Common myeloid progenitor, CD34-positive (primary cell): ENCODE measurements at regions of chr4 and their contacts with region 1.

Region 1: GRCh38 chr4:37452952-37453280 is 208.4 kb downstream of the NWD2 start:
- DNase-seq: peak; percentile 81 to 85 (median 83)
- H3K4me3 ChIP-seq: peak overlapping the region in 4 of 7 experiments; percentile 52 to 77 (median 58)
- H3K27ac ChIP-seq: no peak overlapping the region
- H3K4me1 ChIP-seq: peaks cover 3 to 15% (median 13%) of the 10 kb centered on the region in 4 experiments
- H3K27me3 ChIP-seq: peaks cover 11 to 43% (median 29%) of the 10 kb centered on the region in 5 experiments

Region 2: GRCh38 chr4:37415845-37416369 is 37.0 kb before region 1 on chr4:
- CTCF ChIA-PET with region 1: no interaction called
- POLR2A ChIA-PET with region 1: no interaction called
- DNase-seq: no peak
- H3K4me3 ChIP-seq: no peak overlapping the region
- H3K27ac ChIP-seq: no peak overlapping the region
- H3K4me1 ChIP-seq: no peaks in the 10 kb centered on the region
- H3K27me3 ChIP-seq: no peaks in the 10 kb centered on the region

Region 3: DNA sequence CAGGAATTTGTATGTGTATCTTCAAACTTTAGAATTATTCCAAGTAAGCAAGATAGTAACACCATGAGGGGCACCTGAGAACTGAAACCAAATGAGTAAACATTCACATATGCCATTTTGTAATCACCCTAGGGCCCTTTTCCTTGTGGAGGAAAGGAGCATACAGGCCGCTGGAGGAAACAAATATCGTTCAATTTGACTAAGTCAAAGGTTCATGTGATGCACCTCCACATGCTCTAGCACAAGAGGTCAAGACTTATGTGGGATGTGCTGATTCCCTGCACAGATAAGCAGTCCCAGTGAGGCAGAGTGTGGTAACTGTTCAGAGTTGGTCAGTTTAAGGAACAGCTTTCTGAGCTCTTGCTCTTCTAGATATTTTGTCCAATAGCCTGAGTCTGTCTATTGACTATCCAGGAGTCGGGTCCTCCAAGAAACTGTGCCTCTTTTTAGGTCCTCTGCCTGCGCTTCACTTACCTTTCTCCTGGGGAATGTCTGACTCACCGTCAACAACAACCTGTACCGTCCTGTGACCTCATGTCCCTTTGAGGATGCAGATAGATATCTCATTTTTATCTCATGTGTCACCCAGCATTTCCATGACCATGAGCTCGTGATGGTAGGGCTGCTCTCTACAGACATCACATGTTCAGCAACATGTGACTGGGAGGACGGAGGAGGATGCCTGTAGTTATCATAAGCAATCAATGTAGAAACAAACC is 11.5 kb before region 1 on chr4:
- CTCF ChIA-PET with region 1: interaction called, 17 read pairs
- POLR2A ChIA-PET with region 1: no interaction called
- DNase-seq: no peak
- H3K4me3 ChIP-seq: no peak overlapping the region
- H3K27ac ChIP-seq: no peak overlapping the region
- H3K4me1 ChIP-seq: no peaks in the 10 kb centered on the region
- H3K27me3 ChIP-seq: peaks cover 0 to 3% (median 0%) of the 10 kb centered on the region in 5 experiments

Region 4: GRCh38 chr4:37481547-37482122 is 28.7 kb after region 1 on chr4:
- CTCF ChIA-PET with region 1: no interaction called
- POLR2A ChIA-PET with region 1: no interaction called
- DNase-seq: peak in 1 of 3 donors; percentile 17
- H3K4me3 ChIP-seq: no peak overlapping the region
- H3K27ac ChIP-seq: no peak overlapping the region
- H3K4me1 ChIP-seq: peaks cover 0 to 17% (median 8%) of the 10 kb centered on the region in 4 experiments
- H3K27me3 ChIP-seq: no peaks in the 10 kb centered on the region

Region 5: GRCh38 chr4:37561803-37562207 is 108.9 kb after region 1 on chr4:
- CTCF ChIA-PET with region 1: interaction called, 20 read pairs
- POLR2A ChIA-PET with region 1: no interaction called
- DNase-seq: no peak
- H3K4me3 ChIP-seq: no peak overlapping the region
- H3K27ac ChIP-seq: no peak overlapping the region
- H3K4me1 ChIP-seq: no peaks in the 10 kb centered on the region
- H3K27me3 ChIP-seq: no peaks in the 10 kb centered on the region

Region 6: GRCh38 chr4:37567841-37568240 is 114.9 kb after region 1 on chr4:
- CTCF ChIA-PET with region 1: interaction called, 20 read pairs
- POLR2A ChIA-PET with region 1: no interaction called
- DNase-seq: no peak
- H3K4me3 ChIP-seq: no peak overlapping the region
- H3K27ac ChIP-seq: no peak overlapping the region
- H3K4me1 ChIP-seq: no peaks in the 10 kb centered on the region
- H3K27me3 ChIP-seq: no peaks in the 10 kb centered on the region

Region 7: GRCh38 chr4:37615059-37615719 is 162.3 kb after region 1 on chr4:
- CTCF ChIA-PET with region 1: no interaction called
- POLR2A ChIA-PET with region 1: no interaction called
- DNase-seq: no peak
- H3K4me3 ChIP-seq: no peak overlapping the region
- H3K27ac ChIP-seq: no peak overlapping the region
- H3K4me1 ChIP-seq: no peaks in the 10 kb centered on the region
- H3K27me3 ChIP-seq: no peaks in the 10 kb centered on the region